Breast epithelium (tissue), 4 donors: ENCODE measurements at regions of chr2 and their contacts with region 1.

Region 1: GRCh38 chr2:45706033-45706432 is 54.6 kb downstream of the PRKCE start:
- DNase-seq: peak in 1 of 2 donors; percentile 43
- H3K4me3 ChIP-seq: no peak overlapping the region
- H3K27ac ChIP-seq: peak overlapping the region; percentile 19 to 65
- H3K4me1 ChIP-seq: peaks cover 0 to 17% of the 10 kb centered on the region in 2 donors
- H3K27me3 ChIP-seq: no peaks in the 10 kb centered on the region
- CTCF ChIP-seq: no peak
- POLR2A ChIP-seq: no peak

Region 2: DNA sequence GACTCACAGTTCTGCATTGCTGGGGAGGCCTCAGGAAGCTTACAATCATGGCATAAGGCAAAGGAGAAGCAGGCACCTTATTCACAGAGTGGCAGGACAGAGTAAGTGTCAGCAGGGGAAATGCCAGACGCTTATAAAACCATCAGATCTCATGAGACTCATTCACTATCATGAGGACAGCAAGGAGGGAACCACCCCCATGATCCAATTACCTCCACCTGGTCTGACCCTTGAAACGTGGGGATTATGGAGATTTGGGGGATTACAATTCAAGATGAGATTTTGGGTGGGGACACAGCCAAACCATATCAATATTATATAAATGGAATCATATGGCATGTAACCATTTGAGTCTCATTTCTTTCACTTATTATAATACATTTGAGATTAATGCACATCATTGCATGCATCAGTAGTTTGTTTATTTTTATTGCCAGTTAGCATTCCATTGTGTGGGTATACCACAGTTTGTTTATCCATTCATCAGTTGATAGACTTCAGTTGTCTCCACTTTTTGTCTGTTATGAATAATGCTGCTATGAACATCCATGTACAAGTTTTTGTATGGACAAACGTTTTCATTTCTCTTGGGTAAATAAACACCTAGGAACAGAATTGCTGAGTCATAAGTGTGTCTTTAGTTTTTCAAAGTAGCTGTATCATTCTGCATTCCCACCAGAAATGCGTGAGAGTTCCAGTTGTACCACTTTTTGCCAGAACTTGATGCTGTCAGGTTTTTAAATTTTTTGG is 89.2 kb before region 1 on chr2:
- intact Hi-C with region 1: no loop called
- DNase-seq: no peak
- H3K4me3 ChIP-seq: no peak overlapping the region
- H3K27ac ChIP-seq: no peak overlapping the region
- H3K4me1 ChIP-seq: no peaks in the 10 kb centered on the region
- H3K27me3 ChIP-seq: no peaks in the 10 kb centered on the region
- CTCF ChIP-seq: no peak
- POLR2A ChIP-seq: no peak

Region 3: DNA sequence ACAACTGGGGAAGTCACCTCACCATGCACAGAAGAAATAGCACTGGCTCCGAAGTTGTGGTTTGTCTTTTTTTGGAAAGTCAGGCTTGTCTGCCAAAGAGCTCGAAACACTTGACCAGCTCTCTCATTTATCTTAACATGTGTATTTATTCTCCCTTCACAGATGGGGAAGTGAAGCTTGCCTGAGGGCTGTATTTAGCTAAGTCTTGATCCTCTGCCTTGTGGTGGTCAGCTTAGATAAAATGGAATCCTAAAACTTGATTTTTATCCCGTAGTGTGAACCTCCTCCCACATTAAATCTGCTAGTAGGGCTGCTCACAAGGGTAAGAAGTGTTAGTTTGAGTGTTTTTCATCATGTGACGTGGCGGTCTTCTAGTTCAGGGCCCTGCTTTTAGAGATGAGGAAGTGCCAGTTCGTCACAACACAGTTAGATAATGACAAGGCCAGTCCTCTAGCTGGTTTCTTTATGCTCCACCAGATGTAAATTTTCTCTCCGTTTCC is 863.1 kb after region 1 on chr2:
- intact Hi-C with region 1: loop called (anchors 5 kb)
- DNase-seq: no peak
- H3K4me3 ChIP-seq: no peak overlapping the region
- H3K27ac ChIP-seq: peak overlapping the region; percentile 67 to 76
- H3K4me1 ChIP-seq: peaks cover 0 to 14% of the 10 kb centered on the region in 2 donors
- H3K27me3 ChIP-seq: no peaks in the 10 kb centered on the region
- CTCF ChIP-seq: no peak
- POLR2A ChIP-seq: no peak